Activated CD4-positive, alpha-beta T cell treated with anti-CD3 and anti-CD28 coated beads, Interleukin-2, amount 10 ng/mL, durations not matched to agents 24 days and 14 days (primary cell): ENCODE measurements at regions of chr2 and their contacts with region 1.

Region 1: DNA sequence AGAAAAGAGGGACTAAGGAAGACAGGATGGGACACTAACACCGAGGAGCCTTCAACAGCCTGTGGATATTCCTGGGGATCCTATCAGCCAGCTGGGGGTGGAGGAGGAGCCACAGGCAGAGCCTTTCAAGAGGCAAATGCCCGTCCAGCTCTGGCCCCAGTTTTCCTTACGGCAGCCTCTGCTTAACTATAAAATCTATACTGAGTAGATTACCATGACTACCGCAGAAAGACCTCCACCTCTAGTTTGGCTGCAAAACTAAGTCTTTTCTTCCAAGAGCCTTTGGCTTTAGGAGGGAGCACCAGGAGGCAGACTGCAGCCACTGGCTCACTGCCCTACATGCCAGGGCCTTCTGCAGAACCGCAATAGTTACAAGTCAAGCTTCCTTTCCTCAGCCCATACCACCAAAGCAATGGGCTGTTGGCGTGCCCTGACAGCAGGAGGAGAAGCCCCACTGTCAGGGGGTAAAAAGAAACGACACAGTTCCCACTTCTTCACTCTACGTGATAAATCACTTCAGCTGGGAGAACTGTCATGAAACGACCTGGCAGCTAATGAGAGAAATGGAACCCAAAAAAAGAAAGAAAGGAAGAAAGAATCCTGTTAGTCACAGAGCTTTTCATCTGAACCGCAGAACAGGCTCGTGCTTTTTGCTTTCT is 25.1 kb upstream of the CREB1 start:
- DNase-seq: no peak
- H3K4me3 Mint-ChIP-seq: peak overlapping the region; percentile 50
- H3K27ac Mint-ChIP-seq: peak overlapping the region; percentile 15
- H3K4me1 Mint-ChIP-seq: peaks cover 65% of the 10 kb centered on the region
- H3K27me3 Mint-ChIP-seq: no peaks in the 10 kb centered on the region

Region 2: GRCh38 chr2:207523005-207523404 is 18.4 kb after region 1 on chr2:
- intact Hi-C with region 1: loop called (anchors 2 kb)
- DNase-seq: no peak
- H3K4me3 Mint-ChIP-seq: no peak overlapping the region
- H3K27ac Mint-ChIP-seq: no peak overlapping the region
- H3K4me1 Mint-ChIP-seq: peaks cover 27% of the 10 kb centered on the region
- H3K27me3 Mint-ChIP-seq: peaks cover 4% of the 10 kb centered on the region